ENCODE measurements at regions of chr15 and their contacts with region 1.

Region 1: DNA sequence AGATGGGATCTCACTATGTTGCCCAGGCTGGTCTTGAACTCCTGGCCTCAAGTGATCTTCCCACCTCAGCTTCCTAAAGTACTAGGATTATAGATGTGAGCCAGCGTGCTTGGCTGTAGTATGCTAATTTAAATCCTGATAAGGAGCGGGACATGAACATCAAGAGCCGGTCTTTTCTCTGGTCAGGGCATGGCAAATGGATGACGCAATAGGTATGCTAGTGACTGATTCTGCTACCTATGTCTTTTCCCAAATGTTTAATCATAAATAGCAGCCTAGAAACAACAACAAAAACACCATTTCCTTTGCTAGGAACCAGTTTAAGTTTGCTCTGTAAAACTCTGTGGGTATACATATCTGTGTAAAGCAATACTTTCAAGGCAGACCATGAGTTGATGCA is 64.7 kb downstream of the STARD9 start:
- DNase-seq: no peak
- ATAC-seq: no peak
- H3K4me3 ChIP-seq: no peak overlapping the region
- H3K27ac ChIP-seq: no peak overlapping the region
- H3K4me1 ChIP-seq: no peaks in the 10 kb centered on the region
- H3K27me3 ChIP-seq: no peaks in the 10 kb centered on the region

Region 2: DNA sequence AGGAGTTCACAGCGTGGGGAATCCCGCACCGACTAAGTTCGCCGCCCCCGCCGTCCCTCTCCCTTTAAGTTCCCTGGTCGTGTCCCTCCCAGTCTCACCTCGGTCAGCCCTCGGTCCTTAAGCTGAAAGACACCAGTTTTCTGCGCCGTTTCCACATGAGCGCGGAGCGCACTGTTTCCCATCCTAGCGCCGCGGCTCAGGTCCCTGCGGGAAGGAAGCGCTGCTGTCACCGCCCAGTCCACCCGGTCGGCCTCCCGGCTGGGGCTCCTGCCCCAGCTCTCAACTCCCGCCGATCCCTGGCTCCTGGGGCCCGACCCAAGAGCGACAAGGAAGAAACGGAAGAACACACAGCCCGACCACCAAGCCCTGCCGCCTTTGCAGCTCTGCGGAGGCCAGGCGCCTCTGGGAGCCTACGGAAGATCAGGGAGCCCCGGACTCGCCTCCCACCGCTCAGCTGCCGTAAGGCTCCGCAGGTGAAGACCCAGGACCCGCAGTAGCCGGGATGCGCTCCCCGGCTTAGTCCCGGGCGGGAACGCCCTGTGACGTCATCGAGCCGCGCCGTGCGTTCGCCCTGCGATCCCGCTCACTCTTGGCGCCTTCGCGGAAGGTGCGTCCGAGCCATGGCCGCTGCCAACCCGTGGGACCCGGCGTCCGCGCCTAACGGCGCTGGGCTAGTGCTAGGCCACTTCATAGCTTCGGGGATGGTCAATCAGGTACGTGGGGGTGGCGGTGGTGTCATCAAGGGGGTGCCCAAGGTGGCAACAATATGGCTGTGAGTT is 91.7 kb before region 1 on chr15 and contains the starts of genes HAUS2 and LRRC57:
- intact Hi-C with region 1: loop called in 1 of 4 experiments (anchors 10 kb)
- DNase-seq: peak; percentile 91 to 96 (median 95)
- ATAC-seq: peak; percentile 96 to 97
- H3K4me3 ChIP-seq: peak within 1 kb of the TSS; percentile 87
- H3K27ac ChIP-seq: peak within 1 kb of the TSS; percentile 79
- H3K4me1 ChIP-seq: no peaks in the 10 kb centered on the region
- H3K27me3 ChIP-seq: no peaks in the 10 kb centered on the region
- total RNA-seq, gene HAUS2: 10.0 to 15.2 (median 12.1) TPM
- total RNA-seq, gene LRRC57: 11.1 to 17.2 (median 14.4) TPM